Activated CD8-positive, alpha-beta T cell treated with anti-CD3 and anti-CD28 coated beads, Interleukin-2, amount 10 ng/mL, durations not matched to agents 7 days and 5 days (primary cell): ENCODE measurements at regions of chr2 and their contacts with region 1.

Region 1: DNA sequence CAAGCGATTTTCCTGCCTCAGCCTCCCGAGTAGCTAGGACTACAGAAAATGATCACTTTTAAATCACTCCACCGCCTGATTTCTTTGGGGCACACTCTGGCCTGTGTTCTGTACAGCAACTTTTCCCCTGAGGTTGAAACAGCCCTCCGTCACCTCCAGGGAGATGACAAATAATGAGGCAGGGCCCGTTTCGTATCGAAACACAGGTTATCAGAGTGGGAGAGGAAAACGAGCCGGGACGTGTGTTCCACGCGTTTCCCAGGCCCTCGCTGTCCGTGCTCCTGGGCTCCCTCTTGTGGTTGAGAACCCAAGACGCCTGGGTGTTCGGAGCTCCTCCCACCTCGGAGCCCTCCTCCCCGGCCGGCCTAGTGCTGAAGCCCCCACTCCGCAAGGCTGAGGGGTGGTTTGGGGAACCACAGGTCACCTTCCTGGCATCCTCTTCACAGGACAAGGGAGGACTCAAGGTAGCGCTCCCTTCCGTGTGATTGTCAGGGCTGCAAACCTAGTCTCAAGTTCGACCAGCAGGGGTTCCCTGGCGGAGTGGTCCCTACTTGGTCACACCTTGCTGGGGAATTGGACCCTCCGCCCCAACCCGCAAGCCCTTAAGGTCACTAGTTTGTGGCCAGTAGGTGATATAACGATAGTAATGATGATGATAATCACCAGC is 12.8 kb downstream of the ATP6V1B1 start:
- DNase-seq: peak; percentile 82
- ATAC-seq: peak; percentile 99
- H3K4me3 Mint-ChIP-seq: peak overlapping the region; percentile 48
- H3K27ac Mint-ChIP-seq: no peak overlapping the region
- H3K4me1 Mint-ChIP-seq: peaks cover 20% of the 10 kb centered on the region
- H3K27me3 Mint-ChIP-seq: peaks cover 22% of the 10 kb centered on the region

Region 2: GRCh38 chr2:70789304-70790135 is 158.9 kb before region 1 on chr2:
- CTCF ChIA-PET with region 1: interaction called, 24 read pairs
- POLR2A ChIA-PET with region 1: no interaction called
- DNase-seq: peak; percentile 79
- ATAC-seq: peak; percentile 91
- H3K4me3 Mint-ChIP-seq: peak overlapping the region; percentile 65
- H3K27ac Mint-ChIP-seq: no peak overlapping the region
- H3K4me1 Mint-ChIP-seq: peaks cover 5% of the 10 kb centered on the region
- H3K27me3 Mint-ChIP-seq: peaks cover 50% of the 10 kb centered on the region

Region 3: GRCh38 chr2:70861777-70862625 is 86.5 kb before region 1 on chr2:
- CTCF ChIA-PET with region 1: interaction called, 27 read pairs
- POLR2A ChIA-PET with region 1: no interaction called
- DNase-seq: peak; percentile 78
- ATAC-seq: peak; percentile 90
- H3K4me3 Mint-ChIP-seq: no peak overlapping the region
- H3K27ac Mint-ChIP-seq: no peak overlapping the region
- H3K4me1 Mint-ChIP-seq: peaks cover 3% of the 10 kb centered on the region
- H3K27me3 Mint-ChIP-seq: peaks cover 52% of the 10 kb centered on the region

Region 4: DNA sequence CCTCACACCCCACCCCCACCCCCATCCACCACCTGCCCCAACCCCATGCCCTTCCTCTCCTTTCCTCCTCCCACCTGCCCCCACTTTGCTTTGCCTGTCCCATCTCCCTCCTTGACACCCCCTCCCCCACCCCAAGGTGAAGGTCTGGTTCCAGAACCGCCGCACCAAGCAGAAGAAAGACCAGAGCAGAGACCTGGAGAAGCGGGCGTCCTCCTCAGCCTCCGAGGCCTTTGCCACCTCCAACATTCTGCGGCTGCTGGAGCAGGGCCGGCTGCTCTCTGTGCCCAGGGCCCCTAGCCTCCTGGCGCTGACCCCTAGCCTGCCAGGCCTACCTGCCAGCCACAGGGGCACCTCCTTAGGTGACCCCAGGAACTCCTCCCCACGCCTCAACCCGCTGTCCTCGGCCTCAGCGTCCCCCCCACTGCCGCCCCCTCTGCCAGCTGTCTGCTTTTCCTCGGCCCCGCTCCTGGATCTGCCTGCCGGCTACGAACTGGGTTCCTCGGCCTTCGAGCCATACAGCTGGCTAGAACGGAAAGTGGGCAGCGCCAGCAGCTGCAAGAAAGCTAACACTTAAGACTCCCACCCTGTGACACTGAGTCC is 15.7 kb before region 1 on chr2:
- CTCF ChIA-PET with region 1: interaction called, 11 read pairs
- POLR2A ChIA-PET with region 1: no interaction called
- DNase-seq: peak; percentile 15
- ATAC-seq: no peak
- H3K4me3 Mint-ChIP-seq: no peak overlapping the region
- H3K27ac Mint-ChIP-seq: no peak overlapping the region
- H3K4me1 Mint-ChIP-seq: peaks cover 5% of the 10 kb centered on the region
- H3K27me3 Mint-ChIP-seq: peaks cover 11% of the 10 kb centered on the region

Region 5: GRCh38 chr2:70977605-70978205 is 29.2 kb after region 1 on chr2:
- CTCF ChIA-PET with region 1: interaction called, 16 read pairs
- POLR2A ChIA-PET with region 1: no interaction called
- DNase-seq: peak; percentile 36
- ATAC-seq: no peak
- H3K4me3 Mint-ChIP-seq: peak overlapping the region; percentile 75
- H3K27ac Mint-ChIP-seq: peak overlapping the region; percentile 84
- H3K4me1 Mint-ChIP-seq: peaks cover 17% of the 10 kb centered on the region
- H3K27me3 Mint-ChIP-seq: peaks cover 11% of the 10 kb centered on the region